ENCODE measurements at regions of chr2 and their contacts with region 1.

Region 1: DNA sequence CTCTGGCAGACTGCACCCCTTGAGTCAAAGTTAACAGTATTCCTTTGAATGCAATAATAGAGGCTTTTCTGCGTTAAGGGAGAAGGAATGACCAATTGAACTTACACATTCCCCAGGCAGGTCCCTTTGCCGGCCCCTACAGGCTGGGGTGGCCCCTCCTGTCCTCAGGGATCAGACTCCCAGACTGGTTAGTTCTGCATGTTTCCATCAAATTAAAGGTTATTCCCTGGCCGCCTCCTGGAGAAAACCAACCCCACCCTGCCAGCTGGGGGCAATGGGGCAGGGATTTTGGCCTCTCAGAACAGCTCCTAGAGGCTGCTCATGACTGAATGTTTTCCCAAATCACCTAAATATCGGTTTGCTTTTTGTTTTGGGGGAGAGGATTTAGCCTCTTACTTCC is 199.6 kb downstream of the MGAT5 start:
- DNase-seq: no peak
- H3K4me3 ChIP-seq: no peak overlapping the region
- H3K27ac ChIP-seq: no peak overlapping the region
- H3K27me3 ChIP-seq: no peaks in the 10 kb centered on the region
- CTCF ChIP-seq: no peak

Region 2: GRCh38 chr2:133886735-133887660 is 566.5 kb before region 1 on chr2:
- CTCF ChIA-PET with region 1: interaction called, 96 read pairs
- POLR2A ChIA-PET with region 1: no interaction called
- DNase-seq: peak; percentile 77
- H3K4me3 ChIP-seq: no peak overlapping the region; the same call in 1 of the 2 replicates
- H3K27ac ChIP-seq: peak overlapping the region; percentile 75
- H3K27me3 ChIP-seq: peaks cover 3% of the 10 kb centered on the region
- CTCF ChIP-seq: peak; percentile 75

Region 3: GRCh38 chr2:134178241-134178877 is 275.1 kb before region 1 on chr2:
- CTCF ChIA-PET with region 1: no interaction called
- POLR2A ChIA-PET with region 1: no interaction called
- DNase-seq: no peak
- H3K4me3 ChIP-seq: no peak overlapping the region
- H3K27ac ChIP-seq: no peak overlapping the region
- H3K27me3 ChIP-seq: no peaks in the 10 kb centered on the region
- CTCF ChIP-seq: no peak

Region 4: DNA sequence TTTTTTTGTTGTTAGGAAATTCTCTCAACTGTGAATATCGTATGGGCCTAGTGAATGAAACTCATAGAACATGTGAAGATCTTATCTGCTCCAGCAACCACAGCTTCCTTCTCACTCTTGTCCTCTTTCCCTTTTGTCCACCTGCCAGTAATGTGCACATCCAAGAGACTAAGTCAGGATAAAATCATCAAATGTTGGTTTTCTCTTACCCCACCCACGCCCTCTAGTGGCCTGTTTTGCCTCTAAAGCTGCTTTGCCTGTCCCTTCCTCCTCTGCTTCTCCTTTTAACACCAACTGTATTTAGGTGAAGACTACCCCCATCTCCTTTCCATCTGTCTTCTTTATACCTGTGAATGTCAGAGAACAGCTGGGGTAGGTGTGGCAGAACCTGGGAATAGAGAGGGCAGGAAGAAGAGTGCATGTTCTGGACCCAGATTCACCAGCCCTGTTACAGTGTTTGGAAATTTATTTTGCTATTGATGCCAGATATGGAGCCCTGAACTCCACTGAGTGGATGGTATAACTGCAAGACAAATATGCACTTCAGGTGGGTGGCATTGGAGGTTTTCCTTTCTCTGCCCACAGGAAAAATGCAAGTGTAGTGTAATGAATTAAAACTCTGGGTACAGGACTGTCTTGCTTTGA is 208.0 kb before region 1 on chr2:
- CTCF ChIA-PET with region 1: interaction called, 21 read pairs
- POLR2A ChIA-PET with region 1: no interaction called
- DNase-seq: no peak
- H3K4me3 ChIP-seq: no peak overlapping the region
- H3K27ac ChIP-seq: no peak overlapping the region
- H3K27me3 ChIP-seq: no peaks in the 10 kb centered on the region
- CTCF ChIP-seq: peak; percentile 85

Region 5: DNA sequence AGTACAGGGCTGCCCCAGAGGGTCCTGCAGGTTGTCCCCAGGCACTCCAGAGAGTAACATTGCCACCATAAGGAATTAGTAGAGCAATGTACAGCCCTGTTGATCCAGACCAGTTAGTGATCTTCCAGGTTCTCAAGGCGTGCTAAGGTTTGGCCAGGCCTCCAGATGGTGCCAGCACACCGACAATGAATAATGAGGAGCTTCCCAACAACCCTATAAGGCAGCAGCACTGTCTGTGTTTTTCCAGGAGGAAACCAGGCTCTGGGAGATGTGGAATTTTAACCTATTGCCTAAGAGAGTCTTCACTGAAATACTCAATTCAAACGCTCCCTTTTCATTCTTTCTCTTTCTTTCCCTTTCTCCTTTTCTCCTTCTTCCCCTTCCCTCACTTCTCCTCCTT is 77.5 kb before region 1 on chr2:
- CTCF ChIA-PET with region 1: interaction called, 41 read pairs
- POLR2A ChIA-PET with region 1: no interaction called
- DNase-seq: no peak
- H3K4me3 ChIP-seq: no peak overlapping the region
- H3K27ac ChIP-seq: no peak overlapping the region
- H3K27me3 ChIP-seq: no peaks in the 10 kb centered on the region
- CTCF ChIP-seq: peak; percentile 23; the same call in 1 of the 2 replicates

Region 6: DNA sequence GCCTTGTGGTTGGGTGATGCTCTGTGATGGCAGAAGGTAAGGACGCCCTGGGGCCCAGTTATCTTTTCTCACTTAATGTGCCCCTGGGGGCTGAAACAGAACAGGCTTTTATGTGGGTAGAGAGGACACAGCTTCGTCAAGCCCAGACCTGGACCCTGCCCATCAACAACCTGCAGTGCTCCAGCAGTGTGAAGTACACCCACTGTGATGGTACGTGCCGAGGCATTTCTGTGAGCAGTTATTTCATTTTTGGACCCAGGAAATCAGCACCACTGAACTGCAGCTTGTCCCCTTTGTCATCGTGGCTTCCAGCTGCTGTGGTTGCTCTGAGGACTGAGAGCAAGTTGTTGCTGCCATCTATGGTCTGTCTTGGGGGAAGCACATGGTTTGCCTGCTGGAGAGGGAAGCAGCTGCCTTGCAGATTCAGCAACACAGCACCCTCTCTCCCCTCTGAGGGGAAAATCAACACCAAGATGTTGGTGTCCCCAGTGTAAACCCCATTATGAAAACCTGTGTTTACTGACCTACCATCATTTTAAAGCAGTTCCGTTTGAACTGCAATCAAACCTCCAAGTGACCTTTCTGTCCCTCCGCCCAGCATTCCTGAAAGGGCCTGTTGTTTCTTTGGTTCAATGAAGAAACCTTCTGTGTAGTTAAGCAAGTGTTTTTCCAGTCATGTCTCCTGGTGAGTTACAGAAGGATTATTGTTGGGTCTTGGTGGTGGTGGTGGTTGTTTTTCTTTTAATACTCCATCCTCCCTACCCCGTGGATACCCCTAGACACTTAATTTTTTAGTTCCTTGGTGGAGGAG is 41.4 kb before region 1 on chr2:
- CTCF ChIA-PET with region 1: interaction called, 34 read pairs
- POLR2A ChIA-PET with region 1: no interaction called
- DNase-seq: no peak
- H3K4me3 ChIP-seq: no peak overlapping the region
- H3K27ac ChIP-seq: peak overlapping the region; percentile 4
- H3K27me3 ChIP-seq: no peaks in the 10 kb centered on the region
- CTCF ChIP-seq: peak; percentile 77

Region 7: GRCh38 chr2:134431838-134432434 is 21.5 kb before region 1 on chr2:
- CTCF ChIA-PET with region 1: interaction called, 42 read pairs
- POLR2A ChIA-PET with region 1: no interaction called
- DNase-seq: no peak
- H3K4me3 ChIP-seq: no peak overlapping the region
- H3K27ac ChIP-seq: peak overlapping the region; percentile 41
- H3K27me3 ChIP-seq: no peaks in the 10 kb centered on the region
- CTCF ChIP-seq: no peak

Region 8: GRCh38 chr2:134504586-134505336 is 51.3 kb after region 1 on chr2:
- CTCF ChIA-PET with region 1: no interaction called
- POLR2A ChIA-PET with region 1: no interaction called
- DNase-seq: no peak
- H3K4me3 ChIP-seq: no peak overlapping the region
- H3K27ac ChIP-seq: no peak overlapping the region
- H3K27me3 ChIP-seq: peaks cover 2% of the 10 kb centered on the region
- CTCF ChIP-seq: no peak

Region 9: DNA sequence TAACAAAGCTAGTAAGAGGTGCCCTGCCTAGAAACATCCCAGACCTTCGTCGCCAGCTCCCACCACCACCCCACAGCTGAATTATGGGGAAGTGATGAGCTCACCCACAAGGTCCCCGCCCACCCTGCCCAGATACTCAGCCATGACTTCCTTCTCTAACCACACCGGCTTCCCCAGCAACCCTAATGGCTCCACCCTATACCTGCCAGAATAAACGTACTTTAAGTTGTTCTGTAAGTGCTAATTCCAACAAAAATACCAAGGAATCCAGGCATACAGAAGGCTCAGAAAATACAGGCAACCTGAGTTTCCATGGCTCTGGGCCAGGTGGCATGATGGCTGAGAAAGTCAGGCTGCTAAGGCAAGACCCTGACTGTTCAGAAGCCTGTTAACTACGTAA is 226.3 kb after region 1 on chr2:
- CTCF ChIA-PET with region 1: no interaction called
- POLR2A ChIA-PET with region 1: no interaction called
- DNase-seq: no peak
- H3K4me3 ChIP-seq: no peak overlapping the region
- H3K27ac ChIP-seq: no peak overlapping the region
- H3K27me3 ChIP-seq: peaks cover 2% of the 10 kb centered on the region
- CTCF ChIP-seq: no peak

Region 10: GRCh38 chr2:134897932-134898331 is 444.5 kb after region 1 on chr2:
- CTCF ChIA-PET with region 1: interaction called, 20 read pairs
- POLR2A ChIA-PET with region 1: no interaction called
- DNase-seq: no peak
- H3K4me3 ChIP-seq: no peak overlapping the region
- H3K27ac ChIP-seq: no peak overlapping the region
- H3K27me3 ChIP-seq: no peaks in the 10 kb centered on the region
- CTCF ChIP-seq: peak; percentile 43